Tibial artery (tissue), 4 donors: ENCODE measurements at regions of chr10 and their contacts with region 1.

Region 1: GRCh38 chr10:122703439-122704118 is 3.9 kb upstream of the C10orf120 start:
- DNase-seq: peak in 1 of 2 donors; percentile 61
- H3K4me3 ChIP-seq: no peak overlapping the region
- H3K27ac ChIP-seq: no peak overlapping the region
- H3K4me1 ChIP-seq: no peaks in the 10 kb centered on the region
- H3K27me3 ChIP-seq: no peaks in the 10 kb centered on the region
- CTCF ChIP-seq: peak; percentile 81 to 82

Region 2: DNA sequence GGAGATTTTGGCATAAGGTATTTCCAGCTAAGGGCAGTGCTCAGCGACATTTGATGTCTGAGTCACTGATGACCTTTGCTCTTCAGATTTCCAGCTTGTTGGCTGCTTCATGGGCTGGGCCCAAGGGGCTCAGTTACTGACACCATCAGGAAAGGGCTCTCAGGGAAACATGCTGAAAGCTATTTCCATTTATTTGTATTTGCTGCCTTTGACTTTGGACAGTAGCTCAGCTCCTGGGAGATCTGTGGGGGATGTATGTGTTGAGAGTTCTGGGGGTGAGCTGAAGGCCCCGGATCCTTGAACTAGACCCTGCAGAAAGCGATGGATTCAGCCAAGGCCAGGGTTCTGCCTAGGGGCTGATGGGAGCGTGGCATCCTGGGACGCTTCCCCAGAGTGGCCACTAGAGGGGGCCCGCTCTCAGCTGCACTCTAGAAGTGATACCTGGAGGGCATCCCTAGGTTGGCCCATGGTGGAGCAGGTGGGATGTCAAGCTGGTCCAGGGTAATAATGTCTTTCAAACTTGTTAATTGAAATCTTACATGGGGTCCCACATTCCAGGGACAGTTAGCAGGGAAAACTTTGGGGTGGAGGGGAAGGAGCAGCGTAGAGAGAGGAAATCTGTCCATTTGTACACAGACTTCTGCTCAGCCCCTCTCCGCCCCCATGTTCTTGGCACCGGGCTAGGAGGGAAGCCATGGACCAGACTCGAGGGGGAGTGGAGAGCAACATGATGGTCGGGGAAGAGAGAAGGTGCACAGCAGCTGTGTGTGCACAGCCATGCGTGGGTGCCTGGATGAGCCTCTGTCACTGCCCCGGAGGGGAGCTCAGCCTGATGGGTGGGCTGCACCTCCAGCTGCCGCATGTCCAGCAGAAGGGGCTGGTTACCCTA is 435.5 kb before region 1 on chr10:
- intact Hi-C with region 1: no loop called
- DNase-seq: peak in 1 of 2 donors; percentile 43
- H3K4me3 ChIP-seq: no peak overlapping the region
- H3K27ac ChIP-seq: no peak overlapping the region
- H3K4me1 ChIP-seq: peaks cover 0 to 4% (median 0%) of the 10 kb centered on the region in 4 donors
- H3K27me3 ChIP-seq: no peaks in the 10 kb centered on the region
- CTCF ChIP-seq: peak; percentile 66 to 90

Region 3: GRCh38 chr10:122637376-122637775 is 66.2 kb before region 1 on chr10:
- intact Hi-C with region 1: no loop called
- DNase-seq: peak in 1 of 2 donors; percentile 33
- H3K4me3 ChIP-seq: no peak overlapping the region
- H3K27ac ChIP-seq: no peak overlapping the region
- H3K4me1 ChIP-seq: no peaks in the 10 kb centered on the region
- H3K27me3 ChIP-seq: peaks cover 0 to 7% of the 10 kb centered on the region in 2 donors
- CTCF ChIP-seq: no peak

Region 4: GRCh38 chr10:122648599-122649428 is 54.8 kb before region 1 on chr10:
- intact Hi-C with region 1: loop called (anchors 5 kb)
- DNase-seq: peak in 1 of 2 donors; percentile 54
- H3K4me3 ChIP-seq: no peak overlapping the region
- H3K27ac ChIP-seq: no peak overlapping the region
- H3K4me1 ChIP-seq: no peaks in the 10 kb centered on the region
- H3K27me3 ChIP-seq: peaks cover 0 to 37% of the 10 kb centered on the region in 2 donors
- CTCF ChIP-seq: peak; percentile 69 to 76

Region 5: GRCh38 chr10:122740649-122741048 is 37.1 kb after region 1 on chr10:
- intact Hi-C with region 1: no loop called
- DNase-seq: no peak
- H3K4me3 ChIP-seq: no peak overlapping the region
- H3K27ac ChIP-seq: no peak overlapping the region
- H3K4me1 ChIP-seq: no peaks in the 10 kb centered on the region
- H3K27me3 ChIP-seq: peaks cover 0 to 4% of the 10 kb centered on the region in 2 donors
- CTCF ChIP-seq: no peak